MCF 10A (cell line): ENCODE measurements at regions of chr15 and their contacts with region 1.

Region 1: DNA sequence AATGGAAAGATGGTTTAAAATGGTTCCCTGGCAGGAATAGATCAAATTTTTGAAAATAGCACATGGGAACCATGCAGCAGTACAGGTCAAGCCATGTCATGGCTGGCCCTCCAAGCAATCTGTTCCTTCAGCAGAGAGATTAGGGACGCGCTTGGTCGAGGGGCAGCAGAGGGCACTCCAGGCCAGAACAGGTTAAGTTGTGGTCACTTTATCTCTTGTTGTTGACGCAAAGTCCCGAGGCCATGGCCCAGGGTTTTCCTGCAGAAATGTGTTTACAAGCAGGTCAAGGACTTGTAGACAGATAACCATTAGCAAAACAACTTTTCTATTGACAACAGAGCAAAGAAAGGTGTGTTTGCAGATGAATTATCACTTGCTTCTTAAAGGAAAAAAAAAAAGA is 570.0 kb upstream of the NR2F2 start:
- DNase-seq: peak; percentile 4
- H3K4me3 Mint-ChIP-seq: no peak overlapping the region
- H3K27ac Mint-ChIP-seq: no peak overlapping the region
- H3K4me1 Mint-ChIP-seq: no peaks in the 10 kb centered on the region
- H3K27me3 Mint-ChIP-seq: no peaks in the 10 kb centered on the region
- CTCF ChIP-seq: no peak

Region 2: GRCh38 chr15:95784508-95784907 is 24.0 kb after region 1 on chr15:
- CTCF ChIA-PET with region 1: no interaction called
- POLR2A ChIA-PET with region 1: no interaction called
- intact Hi-C with region 1: no loop called
- DNase-seq: no peak
- H3K4me3 Mint-ChIP-seq: no peak overlapping the region
- H3K27ac Mint-ChIP-seq: no peak overlapping the region
- H3K4me1 Mint-ChIP-seq: no peaks in the 10 kb centered on the region
- H3K27me3 Mint-ChIP-seq: no peaks in the 10 kb centered on the region
- CTCF ChIP-seq: no peak

Region 3: DNA sequence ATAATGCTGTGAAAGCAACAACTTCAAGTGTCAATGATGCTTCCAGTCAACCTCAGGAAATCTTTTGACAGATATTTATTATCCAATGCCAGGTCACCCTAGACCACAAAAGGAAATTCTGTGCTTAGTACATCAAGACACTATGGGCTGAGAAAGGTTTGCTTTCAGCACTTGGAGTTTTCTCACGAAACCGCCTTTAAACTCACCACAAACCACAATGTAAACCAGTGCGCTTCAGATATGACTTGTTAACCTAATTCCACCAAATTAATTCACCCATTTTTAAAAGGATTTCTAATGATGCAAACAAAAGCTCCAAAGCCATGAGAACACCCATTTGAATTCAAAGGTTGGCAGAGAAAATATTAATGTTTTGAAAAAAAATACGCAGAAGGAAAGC is 277.1 kb after region 1 on chr15:
- CTCF ChIA-PET with region 1: no interaction called
- POLR2A ChIA-PET with region 1: no interaction called
- intact Hi-C with region 1: loop called (anchors 10 kb)
- DNase-seq: no peak
- H3K4me3 Mint-ChIP-seq: no peak overlapping the region
- H3K27ac Mint-ChIP-seq: no peak overlapping the region
- H3K4me1 Mint-ChIP-seq: no peaks in the 10 kb centered on the region
- H3K27me3 Mint-ChIP-seq: no peaks in the 10 kb centered on the region
- CTCF ChIP-seq: no peak